ENCODE measurements at regions of chr16 and their contacts with region 1.

Region 1: DNA sequence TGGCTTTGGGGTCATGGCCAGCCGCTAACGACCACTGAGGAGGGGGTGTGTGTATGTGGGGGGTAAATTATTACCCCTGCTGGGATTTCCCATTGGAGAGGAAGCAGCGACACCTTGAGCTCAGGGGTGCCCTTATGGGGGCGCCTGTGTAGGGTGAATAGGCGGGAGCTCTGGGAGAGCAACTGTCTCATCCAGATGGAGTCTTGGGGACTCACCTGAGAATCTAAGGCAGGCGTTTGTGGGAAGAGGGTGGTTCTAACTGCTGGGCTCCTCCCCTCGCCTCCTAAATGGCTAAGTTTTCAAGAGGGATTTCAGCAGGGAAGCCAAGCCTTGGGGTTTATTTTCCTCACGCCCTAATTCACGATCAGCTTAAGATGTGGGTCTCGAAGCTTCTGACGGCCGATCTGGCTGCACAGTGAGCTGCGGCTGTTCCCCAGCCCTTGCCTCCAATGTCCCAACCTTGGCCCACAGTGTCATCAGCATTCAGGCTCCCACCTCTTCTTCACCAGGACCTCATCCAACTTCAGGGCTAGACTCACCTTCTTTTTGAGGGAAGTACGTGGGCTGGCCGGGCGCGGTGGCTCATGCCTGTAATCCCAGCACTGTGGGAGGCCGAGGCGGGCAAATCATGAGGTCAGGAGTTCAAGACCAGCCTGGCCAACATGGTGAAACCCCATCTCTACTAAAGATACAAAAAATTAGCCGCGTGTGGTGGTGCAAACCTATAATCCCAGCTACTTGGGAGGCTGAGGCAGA is 136.9 kb upstream of the EEF2KMT start:
- DNase-seq: no peak
- H3K4me3 ChIP-seq: no peak overlapping the region
- H3K27ac ChIP-seq: no peak overlapping the region
- H3K4me1 ChIP-seq: no peaks in the 10 kb centered on the region
- H3K27me3 ChIP-seq: peaks cover 11% of the 10 kb centered on the region
- CTCF ChIP-seq: no peak
- EP300 ChIP-seq: no peak
- POLR2A ChIP-seq: no peak

Region 2: DNA sequence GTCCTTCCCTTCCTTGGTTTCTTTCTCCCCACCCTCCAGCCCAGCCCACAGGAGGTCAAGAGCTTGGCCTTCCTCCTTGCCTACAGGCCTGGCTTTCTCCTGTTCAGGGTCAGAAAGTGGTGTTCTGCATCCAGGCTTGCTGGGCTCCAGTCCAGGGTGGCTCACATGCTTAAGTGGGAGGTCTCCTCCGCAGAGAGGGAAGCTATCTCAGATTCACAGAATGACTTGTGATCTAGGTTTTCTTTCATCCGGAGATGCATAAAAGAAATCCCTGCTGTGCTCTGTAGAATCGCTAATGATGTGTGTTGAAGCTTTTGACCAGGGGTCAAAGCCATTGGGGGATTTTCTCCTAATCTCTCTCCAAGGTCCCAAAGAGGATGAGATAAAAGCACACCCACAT is 245.5 kb after region 1 on chr16:
- in situ Hi-C with region 1: loop called in 2 of 4 experiments (anchors 10 to 25 kb)
- intact Hi-C with region 1: no loop called
- DNase-seq: no peak
- H3K4me3 ChIP-seq: no peak overlapping the region
- H3K27ac ChIP-seq: no peak overlapping the region
- H3K4me1 ChIP-seq: no peaks in the 10 kb centered on the region
- H3K27me3 ChIP-seq: no peaks in the 10 kb centered on the region
- CTCF ChIP-seq: no peak
- EP300 ChIP-seq: no peak
- POLR2A ChIP-seq: no peak

Region 3: GRCh38 chr16:6643080-6643686 is 1408.7 kb after region 1 on chr16:
- in situ Hi-C with region 1: loop called in 2 of 4 experiments (anchors 25 kb)
- intact Hi-C with region 1: loop called (anchors 5 kb)
- DNase-seq: peak; percentile 49
- H3K4me3 ChIP-seq: no peak overlapping the region
- H3K27ac ChIP-seq: no peak overlapping the region
- H3K4me1 ChIP-seq: no peaks in the 10 kb centered on the region
- H3K27me3 ChIP-seq: peaks cover 8% of the 10 kb centered on the region
- CTCF ChIP-seq: peak; percentile 82 to 90 (median 86)
- EP300 ChIP-seq: no peak
- POLR2A ChIP-seq: no peak

Measured in transverse colon (tissue), 4 donors.